Brain microvascular endothelial cell (primary cell): ENCODE measurements at regions of chr17 and their contacts with region 1.

Region 1: GRCh38 chr17:19362277-19363113 is at the start of gene B9D1:
- DNase-seq: peak; percentile 81
- H3K4me3 ChIP-seq: peak within 1 kb of the TSS; percentile 73
- H3K27ac ChIP-seq: peak within 1 kb of the TSS; percentile 85
- H3K27me3 ChIP-seq: no peaks in the 10 kb centered on the region
- CTCF ChIP-seq: peak; percentile 89

Region 2: GRCh38 chr17:19237389-19238166 is 124.9 kb before region 1 on chr17:
- in situ Hi-C with region 1: no loop called
- DNase-seq: no peak
- H3K4me3 ChIP-seq: peak overlapping the region; percentile 86
- H3K27ac ChIP-seq: peak overlapping the region; percentile 29
- H3K27me3 ChIP-seq: no peaks in the 10 kb centered on the region
- CTCF ChIP-seq: no peak

Region 3: DNA sequence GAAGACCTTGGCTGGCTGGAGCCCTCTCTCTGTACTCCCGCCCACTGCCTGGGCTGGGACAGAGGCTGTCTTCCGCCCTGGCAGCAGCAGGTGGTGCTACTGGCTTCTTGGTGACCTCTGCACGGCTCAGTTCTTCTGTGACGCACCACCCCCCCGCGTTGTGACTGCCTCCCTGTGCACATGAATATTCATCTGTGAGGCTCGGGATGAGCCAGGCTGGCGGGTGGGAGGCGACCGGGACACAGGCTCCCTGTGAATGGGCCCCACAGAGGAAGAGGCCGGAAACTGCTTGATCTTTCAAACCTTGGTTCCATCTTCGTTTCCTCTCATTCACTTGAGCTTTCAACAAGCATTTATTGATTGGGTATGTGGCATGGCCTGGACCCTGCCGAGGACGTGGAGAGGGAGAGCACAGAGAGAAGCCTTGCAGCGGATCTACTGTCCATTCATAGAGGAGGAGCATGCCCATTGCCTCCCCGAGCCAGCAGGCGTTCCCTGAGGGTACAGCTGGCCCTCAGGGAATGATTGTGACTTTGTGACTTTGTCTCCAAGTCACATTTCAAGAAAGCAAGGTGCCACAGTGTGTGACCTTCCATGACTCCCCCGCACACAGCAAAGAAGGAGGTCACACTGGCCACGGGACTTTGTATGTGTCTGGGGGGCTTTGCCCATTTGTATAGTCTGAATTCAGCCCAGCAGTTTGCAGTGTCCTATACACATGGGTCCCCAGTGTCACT is 45.0 kb before region 1 on chr17:
- in situ Hi-C with region 1: no loop called
- DNase-seq: peak; percentile 94
- H3K4me3 ChIP-seq: no peak overlapping the region
- H3K27ac ChIP-seq: peak overlapping the region; percentile 59
- H3K27me3 ChIP-seq: no peaks in the 10 kb centered on the region
- CTCF ChIP-seq: peak; percentile 59

Region 4: DNA sequence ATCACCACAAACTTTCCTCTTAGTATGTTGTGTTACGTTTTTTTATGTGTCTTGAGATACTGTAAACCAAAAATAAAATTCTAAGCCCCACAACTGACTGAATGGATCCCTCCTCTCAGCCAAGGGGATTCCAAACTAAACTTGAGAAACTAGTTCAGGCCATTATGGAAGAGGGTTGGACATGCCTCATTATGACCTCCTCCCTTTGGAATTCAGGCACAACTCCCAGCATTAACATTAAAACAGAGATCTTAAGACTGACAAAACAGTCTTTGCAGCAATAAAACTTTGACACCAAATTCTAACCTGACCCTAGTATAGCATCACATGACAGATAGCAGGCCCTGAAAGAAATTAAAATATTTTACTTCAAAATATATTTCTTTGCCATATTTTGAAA is 120.1 kb after region 1 on chr17:
- in situ Hi-C with region 1: no loop called
- DNase-seq: no peak
- H3K4me3 ChIP-seq: no peak overlapping the region
- H3K27ac ChIP-seq: no peak overlapping the region
- H3K27me3 ChIP-seq: no peaks in the 10 kb centered on the region
- CTCF ChIP-seq: no peak

Region 5: GRCh38 chr17:19766422-19767270 is 404.2 kb after region 1 on chr17:
- in situ Hi-C with region 1: loop called (anchors 10 kb)
- DNase-seq: peak; percentile 33
- H3K4me3 ChIP-seq: no peak overlapping the region
- H3K27ac ChIP-seq: no peak overlapping the region
- H3K27me3 ChIP-seq: no peaks in the 10 kb centered on the region
- CTCF ChIP-seq: peak; percentile 99